ENCODE measurements at regions of chr1 and their contacts with region 1.

Region 1: GRCh38 chr1:68442822-68443556 is 6.8 kb downstream of the RPE65 start:
- H3K4me3 Mint-ChIP-seq: no peak overlapping the region
- H3K27ac Mint-ChIP-seq: no peak overlapping the region
- H3K4me1 Mint-ChIP-seq: peaks cover 16% of the 10 kb centered on the region
- H3K27me3 Mint-ChIP-seq: no peaks in the 10 kb centered on the region

Region 2: GRCh38 chr1:67853704-67854103 is 589.3 kb before region 1 on chr1:
- intact Hi-C with region 1: loop called (anchors 10 kb)
- H3K4me3 Mint-ChIP-seq: no peak overlapping the region
- H3K27ac Mint-ChIP-seq: no peak overlapping the region
- H3K4me1 Mint-ChIP-seq: peaks cover 5% of the 10 kb centered on the region
- H3K27me3 Mint-ChIP-seq: peaks cover 11% of the 10 kb centered on the region

Region 3: DNA sequence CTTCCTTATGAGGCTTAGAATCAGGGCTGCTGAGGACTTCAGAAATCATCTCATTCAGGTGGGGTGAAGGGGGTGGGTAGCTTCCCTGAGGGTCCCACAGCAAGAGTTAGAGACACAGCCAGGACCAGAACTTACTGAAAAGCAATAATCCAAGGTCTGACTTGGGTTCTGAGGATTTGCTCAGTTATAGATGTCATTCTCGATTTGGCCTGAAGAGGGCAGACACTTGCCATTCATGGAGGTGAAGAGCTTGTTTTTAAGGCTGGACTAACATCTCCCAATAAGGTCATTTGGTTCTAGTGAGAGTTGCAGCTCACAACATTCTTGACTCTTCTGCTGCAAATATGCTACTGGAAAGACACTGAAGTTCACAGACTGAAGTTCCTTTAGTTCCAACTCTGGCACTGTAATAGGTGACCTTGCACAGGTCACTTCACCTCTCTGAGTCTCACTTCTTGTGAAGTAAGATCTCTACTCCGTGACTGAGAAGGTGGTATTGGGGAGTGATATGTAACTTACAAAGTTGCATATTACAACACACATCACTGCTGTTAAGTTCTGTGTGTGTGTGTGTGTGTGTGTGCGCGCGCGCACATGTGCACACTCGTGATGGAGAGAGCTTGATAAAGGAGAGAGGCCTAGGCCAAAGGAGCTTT is 322.7 kb before region 1 on chr1:
- intact Hi-C with region 1: loop called (anchors 1 kb)
- H3K4me3 Mint-ChIP-seq: no peak overlapping the region
- H3K27ac Mint-ChIP-seq: no peak overlapping the region
- H3K4me1 Mint-ChIP-seq: peaks cover 7% of the 10 kb centered on the region
- H3K27me3 Mint-ChIP-seq: no peaks in the 10 kb centered on the region

Region 4: GRCh38 chr1:68321084-68321685 is 121.8 kb before region 1 on chr1:
- intact Hi-C with region 1: no loop called
- H3K4me3 Mint-ChIP-seq: no peak overlapping the region
- H3K27ac Mint-ChIP-seq: no peak overlapping the region
- H3K4me1 Mint-ChIP-seq: peaks cover 1% of the 10 kb centered on the region
- H3K27me3 Mint-ChIP-seq: no peaks in the 10 kb centered on the region

Region 5: GRCh38 chr1:68346188-68346808 is 96.7 kb before region 1 on chr1:
- intact Hi-C with region 1: loop called (anchors 5 kb)
- H3K4me3 Mint-ChIP-seq: no peak overlapping the region
- H3K27ac Mint-ChIP-seq: no peak overlapping the region
- H3K4me1 Mint-ChIP-seq: peaks cover 29% of the 10 kb centered on the region
- H3K27me3 Mint-ChIP-seq: no peaks in the 10 kb centered on the region

Region 6: DNA sequence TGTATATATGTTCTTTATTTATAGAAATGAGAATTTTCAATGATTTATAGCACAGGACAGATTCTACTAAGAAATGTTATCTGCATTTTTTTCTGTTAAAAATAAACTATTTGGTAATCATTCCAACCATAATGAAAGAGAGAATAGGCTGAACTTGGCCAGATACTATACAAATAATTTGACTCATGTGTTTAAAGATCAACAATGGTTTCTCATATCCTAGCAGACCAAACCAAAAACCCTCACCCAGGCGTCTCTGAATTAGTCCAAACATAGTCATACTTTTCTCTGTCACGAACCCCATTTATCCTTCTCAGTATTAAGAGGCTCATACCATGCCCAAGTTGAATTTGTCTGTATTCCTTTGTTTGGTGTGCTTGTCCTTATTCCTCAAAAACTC is 33.6 kb before region 1 on chr1:
- intact Hi-C with region 1: no loop called
- H3K4me3 Mint-ChIP-seq: no peak overlapping the region
- H3K27ac Mint-ChIP-seq: no peak overlapping the region
- H3K4me1 Mint-ChIP-seq: no peaks in the 10 kb centered on the region
- H3K27me3 Mint-ChIP-seq: peaks cover 8% of the 10 kb centered on the region

Region 7: DNA sequence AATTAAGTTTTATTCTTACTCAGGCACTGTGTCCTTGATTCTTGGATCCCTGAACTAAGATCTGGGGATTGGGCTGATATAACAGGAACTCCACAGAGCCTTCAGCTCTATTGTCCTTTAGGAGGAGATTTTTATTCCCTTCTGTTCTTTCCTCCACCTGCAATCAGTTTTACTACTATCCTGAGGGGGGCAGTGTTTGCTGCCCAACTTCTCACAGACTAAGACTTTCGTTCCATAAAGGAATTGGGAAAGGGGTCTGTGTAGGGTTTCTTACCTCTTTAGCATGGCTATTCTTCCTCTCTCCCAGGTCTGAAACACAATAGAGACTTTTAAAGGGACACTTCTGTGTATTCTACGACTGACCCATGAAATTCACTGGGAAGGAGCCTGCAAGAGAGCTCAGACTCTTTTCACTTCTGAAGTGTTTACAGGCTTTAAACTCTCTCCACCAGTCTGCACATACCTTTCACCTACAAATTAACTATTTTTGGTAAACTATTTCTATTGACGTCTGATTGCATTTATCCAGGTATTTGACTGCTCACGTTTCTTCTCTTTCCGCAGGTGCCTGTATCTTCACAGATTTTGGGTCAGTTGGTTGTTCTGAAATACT is 157.2 kb after region 1 on chr1:
- intact Hi-C with region 1: no loop called
- H3K4me3 Mint-ChIP-seq: no peak overlapping the region
- H3K27ac Mint-ChIP-seq: no peak overlapping the region
- H3K4me1 Mint-ChIP-seq: no peaks in the 10 kb centered on the region
- H3K27me3 Mint-ChIP-seq: no peaks in the 10 kb centered on the region